ENCODE measurements at regions of chr2 and their contacts with region 1.

Region 1: GRCh38 chr2:71558300-71559051 is 105.1 kb downstream of the DYSF start:
- DNase-seq: no peak
- H3K4me3 ChIP-seq: no peak overlapping the region
- CTCF ChIP-seq: no peak
- POLR2A ChIP-seq: no peak

Region 2: DNA sequence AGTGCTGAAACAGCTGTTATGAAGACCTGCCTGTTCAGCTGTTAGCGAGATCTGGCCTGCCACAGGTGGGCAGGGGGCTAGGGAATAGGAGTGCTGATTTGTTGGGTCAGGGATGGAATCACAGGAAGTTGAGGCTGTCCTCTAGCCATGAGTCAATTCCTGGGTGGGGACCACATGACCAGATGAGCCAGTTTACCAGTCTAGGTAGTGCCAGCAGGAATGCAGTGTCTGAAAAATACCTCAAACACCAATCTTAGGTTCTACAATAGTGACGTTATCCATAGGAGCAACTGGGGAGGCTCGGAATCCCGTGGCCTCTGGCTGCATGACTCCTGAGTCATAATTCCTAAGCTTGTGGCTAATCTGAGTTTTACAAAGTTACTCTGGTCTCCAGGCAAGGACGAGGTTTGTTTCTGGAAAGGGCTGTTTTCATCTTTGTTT is 60.2 kb before region 1 on chr2:
- intact Hi-C with region 1: no loop called
- DNase-seq: no peak
- H3K4me3 ChIP-seq: no peak overlapping the region
- CTCF ChIP-seq: no peak
- POLR2A ChIP-seq: no peak

Region 3: GRCh38 chr2:71798266-71799012 is 240.0 kb after region 1 on chr2:
- intact Hi-C with region 1: loop called (anchors 10 kb)
- DNase-seq: peak in 1 of 2 donors; percentile 84
- H3K4me3 ChIP-seq: no peak overlapping the region
- CTCF ChIP-seq: peak in 1 of 3 donors; percentile 23
- POLR2A ChIP-seq: no peak

Measured in lower leg skin (tissue), 4 donors.